PC-9 (cell line): ENCODE measurements at regions of chr11 and their contacts with region 1.

Region 1: GRCh38 chr11:2196970-2197770 is 25.6 kb upstream of the TH start:
- DNase-seq: peak; percentile 40 to 72
- H3K4me3 ChIP-seq: no peak overlapping the region
- H3K27ac ChIP-seq: no peak overlapping the region
- H3K4me1 ChIP-seq: peaks cover 7% of the 10 kb centered on the region
- H3K27me3 ChIP-seq: no peaks in the 10 kb centered on the region
- CTCF ChIP-seq: peak; percentile 88

Region 2: DNA sequence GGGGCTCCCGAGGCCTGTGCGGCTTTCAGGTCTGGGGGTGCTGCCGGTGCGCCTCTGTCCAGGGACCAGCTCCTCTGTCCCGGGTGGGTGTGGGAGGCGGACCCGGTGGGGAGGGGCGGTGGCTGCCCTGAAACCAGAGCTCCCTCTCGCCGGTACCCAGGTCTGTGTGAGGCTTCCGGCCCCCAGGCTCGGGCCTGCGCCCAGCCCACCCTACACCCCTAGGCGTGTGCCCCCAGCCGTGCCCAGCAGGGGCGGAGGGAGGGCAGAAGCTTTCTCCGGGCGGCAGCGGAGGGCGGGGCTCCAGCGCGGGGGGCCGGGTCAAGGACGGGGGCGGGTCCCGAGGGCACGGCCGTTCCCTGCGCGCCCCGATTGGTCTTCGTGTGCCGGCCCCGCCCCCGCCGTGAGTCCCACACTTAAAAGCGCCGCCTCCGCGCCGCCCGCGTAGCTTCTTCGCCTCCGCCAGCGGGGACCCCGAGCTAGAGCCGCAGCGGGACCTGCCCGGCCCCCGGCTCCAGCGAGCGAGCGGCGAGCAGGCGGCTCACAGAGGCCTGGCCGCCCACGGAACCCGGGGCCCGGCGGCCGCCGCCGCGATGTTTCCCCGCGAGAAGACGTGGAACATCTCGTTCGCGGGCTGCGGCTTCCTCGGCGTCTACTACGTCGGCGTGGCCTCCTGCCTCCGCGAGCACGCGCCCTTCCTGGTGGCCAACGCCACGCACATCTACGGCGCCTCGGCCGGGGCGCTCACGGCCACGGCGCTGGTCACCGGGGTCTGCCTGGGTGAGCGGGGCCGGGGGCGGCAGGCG is 1377.8 kb before region 1 on chr11:
- CTCF ChIA-PET with region 1: interaction called, 10 read pairs
- POLR2A ChIA-PET with region 1: no interaction called
- intact Hi-C with region 1: no loop called
- DNase-seq: peak; percentile 65 to 87
- H3K4me3 ChIP-seq: peak overlapping the region; percentile 84
- H3K27ac ChIP-seq: peak overlapping the region; percentile 87
- H3K4me1 ChIP-seq: peaks cover 12% of the 10 kb centered on the region
- H3K27me3 ChIP-seq: no peaks in the 10 kb centered on the region
- CTCF ChIP-seq: no peak

Region 3: DNA sequence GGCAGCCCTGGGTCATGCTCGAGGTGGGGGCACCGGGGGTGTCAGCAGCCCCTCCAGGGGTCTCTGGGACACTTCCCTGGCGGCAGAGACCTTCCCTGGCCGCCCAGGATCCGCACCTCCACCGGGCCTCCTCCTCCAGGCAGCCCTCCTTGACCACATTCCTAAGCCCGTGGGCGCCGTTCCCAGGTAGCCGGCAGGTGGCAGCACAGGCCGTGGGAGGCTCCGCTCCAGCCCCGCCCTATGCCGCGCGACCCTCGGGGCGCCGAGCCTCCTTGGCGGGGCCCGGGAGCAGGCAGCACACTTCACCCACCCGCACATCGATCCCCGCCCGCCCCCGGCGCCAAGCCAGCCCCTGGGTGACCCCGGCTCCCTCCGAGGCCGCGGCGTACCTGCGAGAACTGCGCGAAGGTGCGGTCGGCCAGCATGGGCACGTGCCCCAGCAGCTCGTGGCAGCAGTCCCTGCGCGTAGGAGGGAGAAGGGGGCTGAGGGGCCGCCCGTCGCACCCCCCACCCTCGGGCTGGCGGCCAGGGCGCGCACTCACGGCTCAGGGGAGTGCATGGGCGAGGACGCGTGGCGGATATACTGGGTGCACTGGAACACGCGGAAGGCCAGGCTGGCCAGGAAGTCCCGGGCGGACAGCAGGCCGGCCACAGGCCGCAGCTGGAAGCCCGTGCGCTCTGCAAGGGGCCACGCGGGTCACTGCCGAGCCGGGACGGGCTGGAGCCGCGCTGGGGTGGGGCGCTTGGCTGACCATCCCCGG is 30.9 kb before region 1 on chr11:
- CTCF ChIA-PET with region 1: no interaction called
- POLR2A ChIA-PET with region 1: no interaction called
- intact Hi-C with region 1: loop called (anchors 1 kb)
- DNase-seq: no peak
- H3K4me3 ChIP-seq: no peak overlapping the region
- H3K27ac ChIP-seq: no peak overlapping the region
- H3K4me1 ChIP-seq: peaks cover 42% of the 10 kb centered on the region
- H3K27me3 ChIP-seq: no peaks in the 10 kb centered on the region
- CTCF ChIP-seq: peak; percentile 69

Region 4: GRCh38 chr11:2298795-2299761 is 101.9 kb after region 1 on chr11:
- CTCF ChIA-PET with region 1: interaction called, 3 read pairs
- POLR2A ChIA-PET with region 1: no interaction called
- intact Hi-C with region 1: loop called (anchors 1 kb)
- DNase-seq: peak; percentile 40 to 59
- H3K4me3 ChIP-seq: no peak overlapping the region
- H3K27ac ChIP-seq: no peak overlapping the region
- H3K4me1 ChIP-seq: no peaks in the 10 kb centered on the region
- H3K27me3 ChIP-seq: no peaks in the 10 kb centered on the region
- CTCF ChIP-seq: peak; percentile 75

Region 5: DNA sequence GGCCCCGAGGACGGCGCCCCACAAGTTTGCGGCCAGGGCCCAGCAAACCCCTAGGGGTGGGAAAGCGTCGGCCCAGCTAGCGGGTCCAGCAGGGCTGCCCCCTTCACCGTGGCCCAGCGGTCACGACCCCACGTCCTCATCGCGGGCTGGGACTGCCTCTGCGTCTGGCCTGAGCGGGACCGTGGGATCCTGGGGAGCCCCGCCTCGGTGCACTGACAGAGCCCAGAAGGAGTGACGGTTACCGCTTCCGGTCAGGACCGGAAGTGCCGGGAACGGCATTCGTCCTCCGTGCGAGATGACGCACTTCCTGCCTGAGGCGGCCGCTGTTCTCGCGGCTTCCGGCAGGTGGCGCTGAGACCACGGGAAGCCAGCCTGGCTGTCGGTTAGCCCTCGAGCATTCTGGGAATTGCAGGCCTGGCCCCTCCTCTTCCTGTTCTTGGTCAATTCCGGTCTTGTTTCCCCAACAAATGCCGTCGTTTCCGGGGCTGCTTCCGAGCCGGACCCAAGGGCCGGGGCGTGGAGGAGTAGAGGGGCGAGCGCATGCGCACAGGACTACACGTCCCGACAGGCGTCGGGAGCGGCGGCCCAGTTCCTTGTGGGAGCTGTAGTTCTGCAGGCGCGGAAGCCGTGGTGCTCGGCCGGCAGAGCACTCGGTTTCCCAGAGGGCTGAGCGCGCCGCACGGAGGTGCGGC is 203.0 kb after region 1 on chr11 and contains the start of gene TSSC4:
- CTCF ChIA-PET with region 1: no interaction called
- POLR2A ChIA-PET with region 1: no interaction called
- intact Hi-C with region 1: loop called (anchors 5 kb)
- DNase-seq: peak; percentile 96
- H3K4me3 ChIP-seq: peak within 1 kb of the TSS; percentile 89
- H3K27ac ChIP-seq: peak within 1 kb of the TSS; percentile 62
- H3K4me1 ChIP-seq: no peaks in the 10 kb centered on the region
- H3K27me3 ChIP-seq: no peaks in the 10 kb centered on the region
- CTCF ChIP-seq: peak; percentile 80
- total RNA-seq, gene TSSC4: 35.6 and 49.3 TPM in 2 replicates

Region 6: DNA sequence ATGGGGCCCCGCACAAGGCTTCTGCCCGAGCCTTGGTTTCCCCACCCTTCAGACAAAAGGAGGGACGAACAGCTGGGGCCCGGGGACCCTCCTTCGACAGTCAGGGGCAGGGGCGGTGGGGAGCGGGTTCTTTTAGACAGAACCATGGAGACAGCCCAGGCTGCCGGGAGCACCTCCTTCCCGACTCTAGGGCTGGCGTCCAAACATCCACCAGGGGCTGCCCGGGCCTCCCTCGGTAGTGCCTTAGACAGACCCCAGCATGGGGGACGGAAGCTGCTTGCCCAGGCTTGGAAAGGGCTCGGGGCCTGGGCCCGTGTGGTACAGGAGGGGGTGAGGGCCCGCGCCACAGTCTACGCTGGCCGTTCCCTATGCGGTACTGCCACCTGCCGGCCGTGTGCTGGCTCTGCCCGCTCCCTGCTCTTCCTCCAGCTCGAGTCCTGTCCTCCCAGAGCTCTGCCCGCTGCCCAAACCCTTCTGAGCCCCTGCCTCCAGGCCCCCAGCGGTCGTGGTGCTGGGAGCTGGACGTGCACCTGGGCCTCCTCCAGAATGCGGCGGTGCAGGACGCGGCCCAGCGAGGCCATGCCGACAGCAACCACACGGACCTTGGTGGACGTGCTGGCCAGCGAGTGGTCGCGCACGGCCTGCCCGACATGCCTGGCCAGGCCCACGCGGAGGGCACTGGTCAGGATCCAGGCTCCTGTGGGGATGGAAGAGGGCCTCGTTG is 223.5 kb after region 1 on chr11:
- CTCF ChIA-PET with region 1: no interaction called
- POLR2A ChIA-PET with region 1: no interaction called
- intact Hi-C with region 1: loop called (anchors 1 kb)
- DNase-seq: peak; percentile 37 to 54
- H3K4me3 ChIP-seq: no peak overlapping the region
- H3K27ac ChIP-seq: no peak overlapping the region
- H3K4me1 ChIP-seq: no peaks in the 10 kb centered on the region
- H3K27me3 ChIP-seq: peaks cover 10% of the 10 kb centered on the region; the same call in 1 of the 2 replicates
- CTCF ChIP-seq: peak; percentile 77

Region 7: DNA sequence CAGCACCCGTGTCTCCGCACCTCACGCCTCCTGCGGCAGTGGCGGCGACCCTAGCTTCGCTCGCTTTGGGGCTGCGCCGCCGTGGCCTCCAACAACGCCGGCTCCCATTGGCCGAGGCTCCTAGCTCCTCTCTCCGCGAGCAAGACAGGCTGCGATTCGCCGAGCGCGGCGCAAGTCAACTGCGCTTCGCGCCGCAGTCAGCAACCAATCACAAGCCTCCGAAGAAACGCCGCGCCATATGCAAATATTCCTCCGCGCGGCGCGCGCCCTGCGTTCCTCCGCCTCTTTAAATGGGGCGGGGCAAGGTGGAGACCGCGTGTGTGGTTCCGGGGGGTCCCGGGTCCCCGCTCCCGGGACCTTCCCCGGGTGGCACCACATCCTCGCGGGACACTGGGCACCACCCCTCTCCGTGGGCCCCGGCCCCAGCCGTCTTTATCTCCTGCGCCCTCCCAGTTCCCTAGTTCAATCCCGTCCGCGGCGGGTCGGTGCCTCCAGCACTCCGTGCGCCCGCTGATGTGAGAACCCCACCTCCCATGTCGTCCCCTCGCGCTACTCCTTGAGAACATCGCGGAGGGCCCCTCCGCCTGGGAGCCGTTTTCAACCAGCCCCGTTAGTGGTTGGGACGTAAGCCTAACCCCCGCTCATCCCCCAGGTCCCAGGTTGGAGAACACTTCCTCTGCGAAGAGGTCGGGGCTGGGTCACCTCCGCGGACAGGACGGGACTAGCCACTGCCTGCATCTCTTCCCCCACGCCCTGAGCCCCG is 795.2 kb after region 1 on chr11 and contains the start of gene NAP1L4:
- CTCF ChIA-PET with region 1: no interaction called
- POLR2A ChIA-PET with region 1: no interaction called
- intact Hi-C with region 1: no loop called
- DNase-seq: peak; percentile 84 to 91
- H3K4me3 ChIP-seq: peak within 1 kb of the TSS; percentile 85
- H3K27ac ChIP-seq: peak within 1 kb of the TSS; percentile 73
- H3K4me1 ChIP-seq: peaks cover 26% of the 10 kb centered on the region
- H3K27me3 ChIP-seq: no peaks in the 10 kb centered on the region
- CTCF ChIP-seq: no peak
- total RNA-seq, gene NAP1L4: 73.3 and 86.7 TPM in 2 replicates